ENCODE measurements at regions of chr16 and their contacts with region 1.

Region 1: DNA sequence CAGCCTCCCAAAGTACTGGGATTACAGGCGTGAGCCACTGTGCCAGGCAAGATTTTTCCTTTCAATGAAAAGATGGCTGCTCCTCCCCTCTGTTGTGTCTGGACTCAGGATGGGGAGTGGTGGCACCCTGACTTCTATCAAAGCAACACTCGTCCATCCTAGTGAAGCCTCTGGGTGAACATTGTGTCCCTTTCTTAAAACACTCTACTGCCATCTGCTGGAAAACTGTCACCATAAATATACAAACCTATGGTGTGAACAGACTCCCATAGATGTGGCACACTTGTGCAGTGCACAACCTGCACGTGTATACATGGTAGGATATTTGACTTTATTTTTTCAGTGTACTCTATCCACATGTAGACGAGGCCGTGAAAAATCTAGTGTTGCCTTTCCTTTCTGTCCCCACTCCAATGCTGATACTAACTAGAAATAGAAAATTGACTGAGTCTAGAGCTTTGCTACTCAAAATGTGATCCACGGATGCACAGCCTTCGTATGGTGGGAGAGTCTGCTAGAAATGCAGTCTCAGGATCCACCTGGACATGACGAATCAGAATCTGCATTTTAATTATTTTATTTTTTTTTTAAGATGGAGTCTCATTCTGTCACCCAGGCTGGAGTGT is 55.9 kb upstream of the PLCG2 start:
- DNase-seq: peak in 5 of 7 donors; percentile 50 to 65 (median 55)
- H3K4me3 ChIP-seq: no peak overlapping the region
- H3K27ac ChIP-seq: no peak overlapping the region
- H3K4me1 ChIP-seq: no peaks in the 10 kb centered on the region
- H3K27me3 ChIP-seq: no peaks in the 10 kb centered on the region
- CTCF ChIP-seq: peak; percentile 32 to 90 (median 88)
- POLR2A ChIP-seq: no peak

Region 2: GRCh38 chr16:81366316-81366932 is 356.8 kb before region 1 on chr16:
- intact Hi-C with region 1: loop called (anchors 5 to 10 kb)
- DNase-seq: peak in 1 of 7 donors; percentile 18
- H3K4me3 ChIP-seq: no peak overlapping the region
- H3K27ac ChIP-seq: no peak overlapping the region
- H3K4me1 ChIP-seq: peaks cover 0 to under 1% of the 10 kb centered on the region in 2 donors
- H3K27me3 ChIP-seq: no peaks in the 10 kb centered on the region
- CTCF ChIP-seq: peak; percentile 53 to 83 (median 75)
- POLR2A ChIP-seq: no peak

Region 3: GRCh38 chr16:81403616-81404373 is 319.4 kb before region 1 on chr16:
- intact Hi-C with region 1: loop called (anchors 5 kb)
- DNase-seq: peak; percentile 77 to 94 (median 89)
- H3K4me3 ChIP-seq: peak overlapping the region in 1 of 4 donors; percentile 34
- H3K27ac ChIP-seq: no peak overlapping the region
- H3K4me1 ChIP-seq: peaks cover 4% of the 10 kb centered on the region in 2 donors
- H3K27me3 ChIP-seq: no peaks in the 10 kb centered on the region
- CTCF ChIP-seq: peak; percentile 94 to 97 (median 95)
- POLR2A ChIP-seq: no peak

Region 4: GRCh38 chr16:81841722-81842121 is 118.5 kb after region 1 on chr16:
- intact Hi-C with region 1: no loop called
- DNase-seq: no peak
- H3K4me3 ChIP-seq: no peak overlapping the region
- H3K27ac ChIP-seq: no peak overlapping the region
- H3K4me1 ChIP-seq: no peaks in the 10 kb centered on the region
- H3K27me3 ChIP-seq: no peaks in the 10 kb centered on the region
- CTCF ChIP-seq: no peak
- POLR2A ChIP-seq: no peak